PC-9 (cell line): ENCODE measurements at regions of chr1 and their contacts with region 1.

Region 1: DNA sequence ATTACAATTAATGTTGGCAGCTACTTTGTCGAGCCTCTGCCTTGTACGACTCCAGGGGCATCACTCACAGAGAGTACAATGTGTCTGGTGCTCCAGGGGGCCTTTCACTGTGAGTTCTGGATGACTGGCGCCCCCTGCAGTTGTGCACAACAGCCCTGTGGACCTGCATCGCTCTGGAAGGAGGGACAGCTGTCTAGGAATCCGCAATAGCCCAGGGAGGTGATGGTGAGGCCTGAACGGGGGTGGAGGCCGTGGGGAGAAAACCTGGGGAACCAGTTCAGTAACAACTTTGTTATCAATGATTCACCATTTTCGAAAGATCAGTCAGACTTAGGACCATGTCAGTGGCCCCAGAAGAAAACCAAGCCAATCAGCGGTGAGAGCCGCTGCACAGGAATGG is 189.1 kb downstream of the KAZN start:
- DNase-seq: peak; percentile 37 to 62
- H3K4me3 ChIP-seq: no peak overlapping the region
- H3K27ac ChIP-seq: no peak overlapping the region
- H3K4me1 ChIP-seq: no peaks in the 10 kb centered on the region
- H3K27me3 ChIP-seq: peaks cover 20% of the 10 kb centered on the region; the same call in 1 of the 2 replicates
- CTCF ChIP-seq: no peak

Region 2: DNA sequence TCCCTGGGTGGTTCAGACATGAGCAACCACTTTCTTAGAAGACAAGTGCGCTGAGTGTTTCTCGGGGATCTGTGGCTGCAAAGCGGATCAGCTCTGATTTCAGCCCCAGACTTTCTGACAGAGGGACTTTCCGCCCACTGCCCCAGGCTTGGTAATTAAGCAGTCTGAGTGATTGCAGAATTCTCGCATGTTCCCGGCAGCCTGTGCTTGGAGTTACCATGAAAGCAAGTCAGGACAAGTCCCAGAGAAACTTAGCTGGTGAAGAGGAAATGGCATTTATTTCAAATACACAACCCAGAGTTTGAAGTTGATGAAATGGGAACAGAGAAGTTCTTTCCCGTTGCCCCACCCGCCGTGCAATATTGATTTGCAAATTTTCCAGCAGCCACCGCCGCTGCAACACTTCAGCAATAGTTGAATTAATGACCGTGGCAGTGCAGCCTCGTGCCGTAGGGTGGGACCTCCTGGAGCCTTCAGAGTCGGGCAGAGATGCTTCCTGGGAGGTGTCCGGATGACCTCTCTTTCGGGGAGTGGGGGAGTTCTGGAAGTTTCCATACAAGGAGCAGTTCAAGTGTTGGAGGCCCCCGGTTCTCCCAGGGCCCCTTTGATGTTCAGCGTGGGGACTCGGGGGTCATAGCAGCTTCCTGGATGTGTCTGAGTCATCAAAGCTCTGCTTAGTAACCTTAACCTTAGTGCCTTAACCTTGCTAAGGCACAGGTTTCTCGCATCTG is 54.4 kb before region 1 on chr1:
- CTCF ChIA-PET with region 1: no interaction called
- POLR2A ChIA-PET with region 1: no interaction called
- intact Hi-C with region 1: loop called (anchors 5 kb)
- DNase-seq: peak in 1 of 2 experiments; percentile 50
- H3K4me3 ChIP-seq: no peak overlapping the region
- H3K27ac ChIP-seq: no peak overlapping the region
- H3K4me1 ChIP-seq: no peaks in the 10 kb centered on the region
- H3K27me3 ChIP-seq: peaks cover 42% of the 10 kb centered on the region
- CTCF ChIP-seq: no peak

Region 3: GRCh38 chr1:14765773-14766172 is 21.8 kb before region 1 on chr1:
- CTCF ChIA-PET with region 1: interaction called, 16 read pairs
- POLR2A ChIA-PET with region 1: no interaction called
- intact Hi-C with region 1: no loop called
- DNase-seq: peak in 1 of 2 experiments; percentile 64
- H3K4me3 ChIP-seq: no peak overlapping the region
- H3K27ac ChIP-seq: no peak overlapping the region
- H3K4me1 ChIP-seq: no peaks in the 10 kb centered on the region
- H3K27me3 ChIP-seq: peaks cover 31% of the 10 kb centered on the region; the same call in 1 of the 2 replicates
- CTCF ChIP-seq: no peak

Region 4: DNA sequence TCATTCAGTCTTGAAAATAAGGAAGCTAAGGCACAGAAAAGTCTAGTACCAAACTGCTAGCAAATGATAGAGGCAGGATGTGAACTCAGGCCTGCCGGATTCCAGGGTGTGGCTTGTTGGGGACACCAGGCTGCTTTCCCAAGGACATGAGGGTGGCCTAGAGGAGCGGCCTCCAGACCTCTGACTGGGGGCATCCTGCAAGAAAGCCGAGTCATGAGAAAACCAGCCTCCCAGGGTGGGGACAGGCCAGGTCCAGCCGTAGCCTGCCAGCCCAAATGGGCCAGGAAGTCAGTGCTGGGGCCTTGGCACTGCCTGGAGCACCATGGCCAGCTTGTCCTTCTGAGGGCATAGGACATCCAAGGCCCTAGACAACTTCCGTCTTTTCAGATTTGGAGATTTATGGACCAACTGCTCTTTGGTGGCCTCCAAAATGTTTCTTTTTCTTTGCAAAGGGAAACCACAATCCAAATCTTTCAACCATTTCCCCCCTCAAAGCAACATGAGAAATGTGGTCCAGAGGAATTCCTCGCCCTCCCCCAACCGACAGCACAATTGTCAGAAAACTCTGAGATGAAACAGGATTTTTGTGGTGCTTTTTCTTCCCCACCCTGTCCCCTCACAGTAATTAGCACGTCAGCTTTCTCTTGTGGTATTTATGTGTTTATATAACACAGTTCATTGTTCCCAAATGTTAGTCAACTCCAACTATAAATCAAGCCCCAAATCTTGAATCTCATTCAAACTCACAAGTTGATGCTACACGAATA is 23.2 kb after region 1 on chr1:
- CTCF ChIA-PET with region 1: no interaction called
- POLR2A ChIA-PET with region 1: no interaction called
- intact Hi-C with region 1: no loop called
- DNase-seq: no peak
- H3K4me3 ChIP-seq: no peak overlapping the region
- H3K27ac ChIP-seq: no peak overlapping the region
- H3K4me1 ChIP-seq: no peaks in the 10 kb centered on the region
- H3K27me3 ChIP-seq: no peaks in the 10 kb centered on the region
- CTCF ChIP-seq: no peak

Region 5: GRCh38 chr1:14835725-14836124 is 48.1 kb after region 1 on chr1:
- CTCF ChIA-PET with region 1: interaction called, 11 read pairs
- POLR2A ChIA-PET with region 1: no interaction called
- intact Hi-C with region 1: no loop called
- DNase-seq: no peak
- H3K4me3 ChIP-seq: no peak overlapping the region
- H3K27ac ChIP-seq: no peak overlapping the region
- H3K4me1 ChIP-seq: no peaks in the 10 kb centered on the region
- H3K27me3 ChIP-seq: no peaks in the 10 kb centered on the region
- CTCF ChIP-seq: no peak

Region 6: GRCh38 chr1:14845851-14846250 is 58.2 kb after region 1 on chr1:
- CTCF ChIA-PET with region 1: no interaction called
- POLR2A ChIA-PET with region 1: no interaction called
- intact Hi-C with region 1: no loop called
- DNase-seq: no peak
- H3K4me3 ChIP-seq: no peak overlapping the region
- H3K27ac ChIP-seq: no peak overlapping the region
- H3K4me1 ChIP-seq: no peaks in the 10 kb centered on the region
- H3K27me3 ChIP-seq: peaks cover 21% of the 10 kb centered on the region
- CTCF ChIP-seq: no peak

Region 7: DNA sequence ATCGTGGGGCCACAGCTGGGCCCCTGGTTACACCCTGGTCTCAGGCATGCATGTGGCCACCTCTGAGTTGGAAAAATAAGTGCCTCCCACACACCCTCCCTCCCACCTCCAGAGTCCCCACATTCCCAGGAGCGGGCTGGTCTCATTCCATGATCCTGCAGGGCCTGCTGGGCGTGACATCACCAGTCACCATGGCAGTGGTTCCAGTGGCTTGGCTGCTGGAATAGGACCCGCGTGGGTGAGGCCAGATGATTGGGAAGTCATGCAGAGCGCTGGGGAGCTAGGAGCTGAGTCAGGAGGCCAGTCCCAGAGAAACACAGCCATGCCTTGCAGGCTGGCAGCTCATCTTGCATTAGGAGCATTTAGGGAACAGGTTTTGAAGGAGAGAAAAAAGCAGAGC is 240.5 kb after region 1 on chr1:
- CTCF ChIA-PET with region 1: no interaction called
- POLR2A ChIA-PET with region 1: no interaction called
- intact Hi-C with region 1: loop called (anchors 5 kb)
- DNase-seq: peak; percentile 42 to 71
- H3K4me3 ChIP-seq: no peak overlapping the region
- H3K27ac ChIP-seq: no peak overlapping the region
- H3K4me1 ChIP-seq: no peaks in the 10 kb centered on the region
- H3K27me3 ChIP-seq: no peaks in the 10 kb centered on the region
- CTCF ChIP-seq: no peak